ENCODE measurements at regions of chr18 and their contacts with region 1.

Region 1: GRCh38 chr18:45456090-45457021 is 158.9 kb upstream of the SLC14A2 start:
- DNase-seq: no peak
- H3K4me3 ChIP-seq: no peak overlapping the region
- H3K27ac ChIP-seq: no peak overlapping the region
- H3K4me1 ChIP-seq: no peaks in the 10 kb centered on the region
- H3K27me3 ChIP-seq: no peaks in the 10 kb centered on the region
- CTCF ChIP-seq: no peak
- EP300 ChIP-seq: no peak
- POLR2A ChIP-seq: no peak
- RAD21 ChIP-seq: peak; percentile 7 to 15; a peak in 1 of 4 replicates

Region 2: DNA sequence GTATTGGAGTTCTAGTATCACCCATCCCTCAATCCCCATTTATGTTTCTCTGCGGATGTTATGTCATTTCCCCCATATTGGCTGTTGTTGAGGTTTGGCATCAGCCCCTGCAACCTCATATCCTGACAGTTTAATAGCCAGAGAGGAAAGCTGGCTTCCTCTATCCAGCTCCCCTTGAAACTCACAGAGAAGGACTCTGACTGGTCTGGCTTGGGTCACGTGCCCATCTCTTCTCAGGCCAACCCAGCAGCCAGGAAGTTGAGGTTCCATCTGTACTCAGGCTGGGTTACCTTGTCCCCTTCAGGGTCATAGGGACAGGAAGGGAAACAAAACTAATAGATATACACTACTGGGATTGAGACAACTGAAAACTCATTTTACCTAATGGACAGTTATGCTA is 10.9 kb after region 1 on chr18:
- CTCF ChIA-PET with region 1: interaction called, 10 read pairs
- POLR2A ChIA-PET with region 1: no interaction called
- DNase-seq: no peak
- H3K4me3 ChIP-seq: no peak overlapping the region
- H3K27ac ChIP-seq: no peak overlapping the region
- H3K4me1 ChIP-seq: no peaks in the 10 kb centered on the region
- H3K27me3 ChIP-seq: no peaks in the 10 kb centered on the region
- CTCF ChIP-seq: no peak
- EP300 ChIP-seq: no peak
- POLR2A ChIP-seq: no peak
- RAD21 ChIP-seq: no peak

Region 3: DNA sequence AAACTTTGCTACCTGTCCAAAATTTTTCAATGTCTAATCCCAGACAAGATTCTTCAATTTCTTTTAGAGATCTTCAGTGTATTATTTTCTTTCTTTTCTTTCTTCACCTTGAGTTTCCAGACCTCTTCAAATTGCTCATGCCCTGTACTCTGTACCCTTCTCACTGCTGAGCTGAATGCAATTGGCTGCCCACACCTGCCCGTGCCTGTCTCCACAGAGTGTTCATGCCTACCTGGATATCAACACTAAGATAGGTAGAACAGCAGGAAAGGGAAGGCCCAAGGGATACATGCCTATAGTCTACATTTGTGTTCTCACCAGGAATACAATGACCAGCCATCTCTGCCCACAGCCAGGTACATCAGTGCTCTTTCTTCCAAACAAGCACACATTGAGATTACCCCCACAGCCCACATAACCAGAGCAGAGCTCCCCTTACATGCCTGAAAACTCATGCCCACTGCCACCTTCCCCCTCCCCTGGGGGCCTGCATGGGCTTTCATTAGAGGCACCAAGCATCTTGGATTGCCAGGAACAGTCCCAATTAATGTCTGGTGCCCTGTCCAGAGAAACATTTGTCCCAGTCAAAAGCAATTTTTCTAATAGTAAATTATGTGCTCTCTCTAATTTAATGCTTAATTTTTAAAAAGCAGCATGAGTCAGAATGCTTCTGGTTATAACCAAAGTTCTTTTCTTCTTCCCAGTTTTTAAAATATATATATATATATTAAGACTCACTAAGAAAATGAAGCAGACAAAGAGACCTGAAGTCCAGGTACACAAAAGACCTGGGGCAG is 24.1 kb after region 1 on chr18:
- CTCF ChIA-PET with region 1: no interaction called
- POLR2A ChIA-PET with region 1: no interaction called
- DNase-seq: no peak
- H3K4me3 ChIP-seq: no peak overlapping the region
- H3K27ac ChIP-seq: no peak overlapping the region
- H3K4me1 ChIP-seq: no peaks in the 10 kb centered on the region
- H3K27me3 ChIP-seq: peaks cover 0 to 1% (median 0%) of the 10 kb centered on the region in 4 experiments; a peak in 1 of 7 replicates
- CTCF ChIP-seq: no peak
- EP300 ChIP-seq: no peak
- POLR2A ChIP-seq: no peak
- RAD21 ChIP-seq: no peak

Region 4: GRCh38 chr18:45493830-45494229 is 37.5 kb after region 1 on chr18:
- CTCF ChIA-PET with region 1: no interaction called
- POLR2A ChIA-PET with region 1: no interaction called
- DNase-seq: no peak
- H3K4me3 ChIP-seq: no peak overlapping the region
- H3K27ac ChIP-seq: no peak overlapping the region
- H3K4me1 ChIP-seq: no peaks in the 10 kb centered on the region
- H3K27me3 ChIP-seq: no peaks in the 10 kb centered on the region
- CTCF ChIP-seq: no peak
- EP300 ChIP-seq: no peak
- POLR2A ChIP-seq: no peak
- RAD21 ChIP-seq: no peak

Measured in H1 (cell line).